ENCODE measurements at regions of chr19 and their contacts with region 1.

Region 1: DNA sequence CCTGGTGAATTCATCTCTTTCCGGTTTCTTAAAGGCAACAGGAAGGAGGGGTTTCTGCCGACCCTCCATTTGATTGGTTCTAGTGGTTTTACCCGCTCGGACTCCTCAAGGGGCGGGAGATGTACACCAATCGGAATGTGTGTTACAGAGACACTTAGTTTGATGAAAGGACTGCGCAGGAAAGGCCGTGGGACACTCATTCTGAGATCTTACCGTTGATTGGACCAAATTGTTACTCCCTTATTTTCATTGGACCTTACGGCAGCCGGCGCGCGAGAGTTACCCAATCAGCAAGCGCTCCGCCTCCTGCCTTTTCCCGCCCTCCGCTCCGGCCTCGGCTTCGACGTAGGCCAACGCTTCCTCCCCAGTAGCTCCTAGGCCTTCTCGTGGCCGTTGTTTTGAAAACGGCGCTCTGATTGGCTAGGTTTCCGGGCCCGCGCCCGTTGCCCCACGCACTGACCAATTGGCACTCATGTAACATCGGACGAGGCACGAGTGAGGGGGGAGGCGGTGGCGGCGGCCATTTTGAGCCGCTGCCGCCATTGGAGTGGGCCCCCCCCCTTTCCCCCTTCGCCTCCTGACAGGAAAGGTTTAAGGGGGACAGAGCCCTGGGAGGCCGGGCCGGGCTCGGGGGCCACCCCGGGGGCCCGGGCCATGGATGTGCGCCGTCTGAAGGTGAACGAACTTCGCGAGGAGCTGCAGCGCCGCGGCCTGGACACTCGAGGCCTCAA is at the start of gene HNRNPUL1:
- DNase-seq: peak; percentile 97 to 99
- H3K4me3 ChIP-seq: peak within 1 kb of the TSS; percentile 81 to 82
- H3K27ac ChIP-seq: peak within 1 kb of the TSS; percentile 94 to 98
- H3K4me1 ChIP-seq: peaks cover 9 to 22% of the 10 kb centered on the region in 2 donors
- H3K27me3 ChIP-seq: no peaks in the 10 kb centered on the region
- CTCF ChIP-seq: peak; percentile 25 to 44 (median 40)
- total RNA-seq, gene HNRNPUL1: 81.1 TPM

Region 2: GRCh38 chr19:40777937-40778705 is 485.9 kb before region 1 on chr19 and contains the start of gene RAB4B:
- intact Hi-C with region 1: loop called (anchors 10 kb)
- DNase-seq: peak; percentile 99 to 100
- H3K4me3 ChIP-seq: peak within 1 kb of the TSS; percentile 81 to 91
- H3K27ac ChIP-seq: peak within 1 kb of the TSS; percentile 97 to 99
- H3K4me1 ChIP-seq: peaks cover 0 to 13% of the 10 kb centered on the region in 2 donors
- H3K27me3 ChIP-seq: no peaks in the 10 kb centered on the region
- CTCF ChIP-seq: no peak
- total RNA-seq, gene RAB4B: 56.8 TPM

Region 3: DNA sequence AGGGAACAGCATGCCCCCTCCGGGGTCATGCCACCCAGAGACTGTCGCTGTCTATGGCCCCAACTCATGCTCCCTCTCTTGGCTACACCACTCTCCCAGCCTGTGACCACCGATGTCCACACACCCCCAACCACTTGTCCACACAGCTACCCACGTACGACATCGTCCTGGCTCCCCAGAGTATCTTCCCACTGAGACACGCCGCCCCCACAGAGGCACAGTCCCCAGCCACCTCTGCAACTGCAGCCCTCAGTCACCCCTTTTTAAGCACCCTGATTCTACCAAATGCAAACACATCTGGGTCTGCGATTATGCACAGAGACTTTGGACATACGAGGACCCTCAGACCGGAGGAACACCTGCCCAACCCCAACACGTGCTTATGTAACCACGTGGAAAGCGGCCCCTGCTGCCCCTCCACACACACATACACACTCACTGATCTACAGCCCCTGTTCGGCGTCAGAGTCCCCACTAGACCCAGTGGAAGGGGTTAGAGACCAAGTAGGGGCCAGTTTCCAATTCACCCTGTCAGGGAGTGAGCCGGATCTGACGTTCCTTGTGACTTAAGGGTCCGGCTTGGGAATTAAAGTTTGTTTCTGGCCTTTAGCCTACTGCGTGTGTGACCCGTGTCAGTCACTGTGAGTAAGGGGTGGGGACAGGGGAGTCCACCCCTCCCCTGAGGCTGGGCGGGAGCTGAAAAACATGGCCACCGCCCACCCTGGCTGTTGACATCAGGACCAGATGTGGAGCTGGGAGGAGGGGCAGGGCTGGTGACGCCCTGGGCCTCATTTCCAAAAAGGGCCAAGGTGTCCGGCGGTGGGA is 56.9 kb before region 1 on chr19:
- intact Hi-C with region 1: loop called (anchors 1 kb)
- DNase-seq: peak in 1 of 2 donors; percentile 86
- H3K4me3 ChIP-seq: peak overlapping the region in 1 of 2 donors; percentile 35
- H3K27ac ChIP-seq: peak overlapping the region; percentile 66 to 70
- H3K4me1 ChIP-seq: no peaks in the 10 kb centered on the region
- H3K27me3 ChIP-seq: no peaks in the 10 kb centered on the region
- CTCF ChIP-seq: no peak

Region 4: GRCh38 chr19:41218615-41219507 is 45.2 kb before region 1 on chr19 and contains the start of gene AXL:
- intact Hi-C with region 1: loop called (anchors 2 kb)
- DNase-seq: peak; percentile 66 to 92
- H3K4me3 ChIP-seq: peak within 1 kb of the TSS; percentile 66 to 68
- H3K27ac ChIP-seq: peak within 1 kb of the TSS; percentile 92 to 95
- H3K4me1 ChIP-seq: peaks cover 0 to 21% of the 10 kb centered on the region in 2 donors
- H3K27me3 ChIP-seq: no peaks in the 10 kb centered on the region
- CTCF ChIP-seq: peak in 1 of 3 experiments; percentile 6
- total RNA-seq, gene AXL: 122 TPM

Region 5: GRCh38 chr19:41226053-41226873 is 37.8 kb before region 1 on chr19:
- intact Hi-C with region 1: loop called (anchors 1 kb)
- DNase-seq: peak; percentile 37 to 92
- H3K4me3 ChIP-seq: peak overlapping the region; percentile 63 to 66
- H3K27ac ChIP-seq: peak overlapping the region; percentile 92 to 93
- H3K4me1 ChIP-seq: peaks cover 7 to 32% of the 10 kb centered on the region in 2 donors
- H3K27me3 ChIP-seq: no peaks in the 10 kb centered on the region
- CTCF ChIP-seq: peak in 1 of 3 experiments; percentile 29

Region 6: DNA sequence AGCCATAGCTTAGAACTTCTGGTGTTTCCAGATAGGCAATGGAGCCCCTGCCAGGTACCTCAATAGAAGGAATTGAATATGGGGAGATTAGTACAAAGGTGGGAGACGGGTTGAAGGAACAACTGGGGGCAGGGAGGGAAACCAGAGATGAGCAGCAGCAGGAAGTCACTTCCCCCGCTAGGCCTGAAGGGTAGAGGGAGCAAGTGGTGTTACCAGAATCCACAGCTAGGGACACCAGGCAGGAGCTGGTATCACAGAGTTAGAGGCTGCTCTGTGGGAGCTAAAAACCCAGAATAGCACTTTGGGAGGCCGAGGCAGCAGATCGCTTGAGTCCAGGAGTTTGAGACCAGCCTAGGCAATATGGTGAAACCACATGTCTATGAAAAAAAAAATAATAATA is 15.1 kb before region 1 on chr19:
- intact Hi-C with region 1: no loop called
- DNase-seq: no peak
- H3K4me3 ChIP-seq: no peak overlapping the region
- H3K27ac ChIP-seq: no peak overlapping the region
- H3K4me1 ChIP-seq: no peaks in the 10 kb centered on the region
- H3K27me3 ChIP-seq: no peaks in the 10 kb centered on the region
- CTCF ChIP-seq: no peak